Activated CD4-positive, alpha-beta T cell treated with anti-CD3 and anti-CD28 coated beads for 36 hours (primary cell): ENCODE measurements at regions of chr1 and their contacts with region 1.

Region 1: GRCh38 chr1:32394141-32394889 is at the start of gene BSDC1:
- DNase-seq: peak; percentile 100
- ATAC-seq: peak; percentile 98
- H3K4me3 Mint-ChIP-seq: peak within 1 kb of the TSS; percentile 83
- H3K27ac Mint-ChIP-seq: peak within 1 kb of the TSS; percentile 98
- H3K4me1 Mint-ChIP-seq: peaks cover 19% of the 10 kb centered on the region
- H3K27me3 Mint-ChIP-seq: no peaks in the 10 kb centered on the region
- total RNA-seq, gene BSDC1: 29.4 to 36.9 TPM

Region 2: DNA sequence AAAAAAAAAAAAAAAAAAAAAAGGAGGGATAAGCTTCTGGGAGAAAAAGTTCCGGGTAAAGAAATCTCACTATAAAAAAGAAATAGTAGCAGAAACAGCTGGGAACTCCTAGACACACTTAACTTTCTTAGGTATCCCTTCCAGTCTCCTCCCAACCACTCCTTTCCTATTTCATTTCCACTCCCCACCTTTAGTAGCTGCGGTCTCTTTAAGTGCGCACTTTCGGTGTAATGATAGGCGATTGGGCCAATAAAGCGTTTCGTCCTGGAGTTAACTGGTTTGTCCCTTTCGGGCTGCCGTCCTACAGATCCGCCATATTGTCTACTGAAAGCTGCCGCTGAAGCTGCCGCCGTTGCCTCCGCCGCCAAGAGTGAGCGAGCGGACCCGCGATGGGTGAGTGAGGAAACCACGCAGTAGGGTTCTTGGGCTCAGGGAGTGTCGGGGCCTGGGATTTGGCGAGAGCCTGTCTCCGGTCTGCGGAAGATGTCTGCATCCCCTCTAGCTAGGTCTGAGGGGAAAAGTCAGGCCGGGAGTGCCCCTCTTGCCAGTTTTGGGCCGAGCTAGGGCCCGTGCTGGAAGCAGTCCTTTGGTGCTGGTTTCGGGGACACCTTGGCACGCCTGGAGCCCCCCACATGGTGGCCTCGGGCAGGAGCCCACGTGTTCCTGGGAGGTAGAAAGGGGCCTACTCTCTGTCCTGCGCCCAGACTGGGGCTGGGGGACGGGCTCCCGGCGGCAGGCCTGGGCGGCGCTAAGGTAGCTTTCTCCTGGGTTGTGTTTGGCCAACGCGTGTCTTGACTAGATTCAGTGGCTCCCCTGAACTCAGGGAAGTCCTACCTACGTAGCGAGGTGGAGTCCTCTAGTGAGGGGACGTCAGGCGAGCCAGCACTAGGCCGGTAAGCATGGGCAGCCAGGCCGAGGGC is 286.3 kb before region 1 on chr1 and contains the start of gene KPNA6:
- CTCF ChIA-PET with region 1: interaction called, 7 read pairs
- POLR2A ChIA-PET with region 1: interaction called, 3 read pairs
- intact Hi-C with region 1: loop called in 1 of 2 experiments (anchors 1 kb)
- DNase-seq: peak; percentile 94
- ATAC-seq: peak; percentile 77
- H3K4me3 Mint-ChIP-seq: peak within 1 kb of the TSS; percentile 88
- H3K27ac Mint-ChIP-seq: peak within 1 kb of the TSS; percentile 96
- H3K4me1 Mint-ChIP-seq: peaks cover 39% of the 10 kb centered on the region
- H3K27me3 Mint-ChIP-seq: no peaks in the 10 kb centered on the region
- total RNA-seq, gene KPNA6: 70.0 to 78.3 TPM

Region 3: DNA sequence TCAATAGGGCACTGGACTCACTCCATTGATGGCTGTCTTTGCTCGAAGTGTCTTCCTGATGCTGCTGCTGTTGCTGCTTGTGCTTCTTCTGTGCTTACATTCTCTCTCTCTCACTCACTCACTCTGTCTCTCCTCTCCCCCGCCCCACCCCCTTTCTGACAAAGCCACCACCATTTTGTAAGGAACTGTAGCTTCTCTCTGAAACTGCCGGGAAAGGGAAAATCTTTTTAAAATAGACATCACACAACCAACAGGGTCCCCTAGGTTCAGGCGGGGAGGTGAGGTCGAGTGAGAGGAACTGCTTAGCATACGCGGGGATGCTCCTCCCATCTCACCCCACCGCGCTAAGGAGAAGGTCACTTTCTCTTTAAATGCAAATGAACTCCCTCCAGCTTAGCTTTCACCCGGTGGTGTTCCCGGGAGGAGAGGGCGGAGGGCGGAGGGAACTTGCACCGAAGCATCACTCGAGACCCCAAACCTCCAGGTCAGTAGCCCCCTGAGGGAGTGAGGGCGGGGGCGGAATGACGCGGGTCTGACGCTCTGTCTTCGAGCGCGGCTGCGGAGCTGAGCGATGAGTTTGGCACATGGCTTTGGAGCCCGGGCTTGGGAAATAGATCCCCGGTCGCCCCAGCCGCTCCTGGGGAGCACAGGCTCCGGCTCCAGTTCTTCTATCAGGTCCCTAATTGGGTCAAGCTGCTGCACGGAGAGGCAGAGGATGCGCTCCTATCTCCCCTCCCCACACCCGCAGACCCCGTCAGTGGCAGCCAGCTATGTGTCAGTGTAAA is 193.9 kb before region 1 on chr1 and contains the start of gene CCDC28B:
- CTCF ChIA-PET with region 1: no interaction called
- POLR2A ChIA-PET with region 1: no interaction called
- intact Hi-C with region 1: loop called in 1 of 2 experiments (anchors 1 kb)
- DNase-seq: peak; percentile 77
- ATAC-seq: peak; percentile 53
- H3K4me3 Mint-ChIP-seq: peak within 1 kb of the TSS; percentile 71
- H3K27ac Mint-ChIP-seq: peak within 1 kb of the TSS; percentile 86
- H3K4me1 Mint-ChIP-seq: peaks cover 57% of the 10 kb centered on the region
- H3K27me3 Mint-ChIP-seq: no peaks in the 10 kb centered on the region
- total RNA-seq, gene CCDC28B: 13.0 to 19.3 TPM

Region 4: GRCh38 chr1:32221980-32222755 is 172.1 kb before region 1 on chr1 and contains the starts of genes EIF3I and TMEM234:
- CTCF ChIA-PET with region 1: no interaction called
- POLR2A ChIA-PET with region 1: no interaction called
- intact Hi-C with region 1: loop called in 1 of 2 experiments (anchors 1 kb)
- DNase-seq: peak; percentile 95
- ATAC-seq: peak; percentile 95
- H3K4me3 Mint-ChIP-seq: peak within 1 kb of the TSS; percentile 96
- H3K27ac Mint-ChIP-seq: peak within 1 kb of the TSS; percentile 97
- H3K4me1 Mint-ChIP-seq: peaks cover 29% of the 10 kb centered on the region
- H3K27me3 Mint-ChIP-seq: no peaks in the 10 kb centered on the region
- total RNA-seq, gene EIF3I: 299 to 349 TPM
- total RNA-seq, gene TMEM234: 7.3 to 8.2 TPM

Region 5: GRCh38 chr1:32335790-32336590 is 58.3 kb before region 1 on chr1 and contains the start of gene MARCKSL1:
- CTCF ChIA-PET with region 1: no interaction called
- POLR2A ChIA-PET with region 1: interaction called, 15 read pairs
- intact Hi-C with region 1: loop called in 1 of 2 experiments (anchors 1 kb)
- DNase-seq: peak; percentile 88
- ATAC-seq: peak; percentile 50
- H3K4me3 Mint-ChIP-seq: peak within 1 kb of the TSS; percentile 77
- H3K27ac Mint-ChIP-seq: peak within 1 kb of the TSS; percentile 76
- H3K4me1 Mint-ChIP-seq: peaks cover 52% of the 10 kb centered on the region
- H3K27me3 Mint-ChIP-seq: no peaks in the 10 kb centered on the region
- total RNA-seq, gene MARCKSL1: 27.0 to 29.3 TPM